Posterior cingulate gyrus (tissue), 11 donors: ENCODE measurements at regions of chr10 and their contacts with region 1.

Region 1: GRCh38 chr10:24642622-24643417 is 80.9 kb downstream of the ARHGAP21 start:
- DNase-seq: no peak

Region 2: DNA sequence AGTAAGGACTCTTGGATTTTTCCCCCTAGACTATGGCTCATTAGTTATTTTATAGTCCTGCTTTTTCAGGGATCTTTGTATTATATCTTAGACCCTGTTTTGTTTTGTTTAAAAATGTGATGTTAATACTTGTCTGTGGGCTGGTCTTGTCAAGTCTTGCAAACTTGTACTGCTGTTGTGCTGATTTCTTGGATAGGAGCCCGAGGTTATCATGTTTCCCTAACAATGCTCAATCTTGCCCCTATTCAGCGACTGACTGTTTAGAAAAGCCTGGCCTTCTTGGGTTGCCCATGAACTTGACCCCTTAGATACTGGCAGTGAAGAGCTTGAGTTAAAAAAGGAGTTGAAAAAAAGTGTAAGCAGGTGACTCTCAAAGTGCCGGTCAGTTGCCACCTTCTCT is 318.2 kb before region 1 on chr10:
- intact Hi-C with region 1: no loop called
- DNase-seq: no peak

Region 3: GRCh38 chr10:24718031-24718855 is 75.4 kb after region 1 on chr10:
- intact Hi-C with region 1: loop called (anchors 2 kb)
- DNase-seq: no peak

Region 4: DNA sequence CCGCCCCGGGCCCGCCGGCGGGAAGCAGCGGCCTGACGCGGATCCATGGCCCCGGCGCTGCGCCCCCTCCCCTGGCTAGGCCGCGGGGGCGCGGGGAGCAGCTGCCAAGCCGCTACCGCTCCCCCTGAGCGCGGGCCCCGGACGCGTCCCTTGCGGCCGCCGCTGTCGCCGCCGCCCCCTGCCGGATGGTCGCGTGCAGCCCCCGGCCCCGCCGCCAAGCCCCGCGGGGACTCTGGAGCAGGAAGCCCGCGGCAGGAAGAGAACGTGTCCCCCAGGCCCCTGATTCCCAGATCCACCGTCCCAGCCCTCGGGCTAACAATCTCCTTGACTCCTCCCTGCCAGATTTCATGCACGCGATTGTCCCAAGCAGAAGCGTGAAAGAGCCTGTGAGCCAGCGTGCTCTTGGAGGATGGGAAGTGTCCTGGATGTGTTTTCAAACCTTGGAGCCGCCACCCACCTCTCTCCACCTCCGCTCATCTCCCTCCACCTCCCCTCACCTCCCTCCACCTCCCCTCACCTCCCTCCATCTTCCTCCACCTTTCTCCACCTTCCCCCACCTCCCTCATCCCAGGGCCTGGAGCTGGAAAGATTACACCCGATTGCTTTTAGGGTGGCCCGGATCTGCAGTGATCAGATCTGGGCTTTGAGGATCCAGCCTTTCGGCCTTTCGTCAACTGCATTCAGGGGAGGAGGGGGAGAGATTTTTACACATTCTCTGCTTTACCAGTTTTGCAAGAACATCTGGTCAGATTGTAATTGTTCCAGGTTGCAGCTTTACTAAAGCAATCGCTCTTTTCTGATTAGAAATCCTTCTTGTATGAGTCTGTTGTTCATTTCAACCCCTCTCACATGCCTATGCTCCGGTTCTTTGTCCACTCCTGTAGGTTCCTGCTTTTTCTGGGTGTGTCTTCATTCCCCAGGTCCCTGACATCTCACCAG is 310.2 kb after region 1 on chr10:
- intact Hi-C with region 1: loop called (anchors 5 kb)
- DNase-seq: peak; percentile 29 to 91 (median 48)

Region 5: GRCh38 chr10:24989867-24990266 is 347.0 kb after region 1 on chr10:
- intact Hi-C with region 1: loop called (anchors 5 kb)
- DNase-seq: no peak

Region 6: GRCh38 chr10:25080880-25081581 is 438.2 kb after region 1 on chr10:
- intact Hi-C with region 1: loop called (anchors 10 kb)
- DNase-seq: peak; percentile 66 to 97 (median 86)